CD8-positive, alpha-beta T cell (primary cell): ENCODE measurements at regions of chr1 and their contacts with region 1.

Region 1: DNA sequence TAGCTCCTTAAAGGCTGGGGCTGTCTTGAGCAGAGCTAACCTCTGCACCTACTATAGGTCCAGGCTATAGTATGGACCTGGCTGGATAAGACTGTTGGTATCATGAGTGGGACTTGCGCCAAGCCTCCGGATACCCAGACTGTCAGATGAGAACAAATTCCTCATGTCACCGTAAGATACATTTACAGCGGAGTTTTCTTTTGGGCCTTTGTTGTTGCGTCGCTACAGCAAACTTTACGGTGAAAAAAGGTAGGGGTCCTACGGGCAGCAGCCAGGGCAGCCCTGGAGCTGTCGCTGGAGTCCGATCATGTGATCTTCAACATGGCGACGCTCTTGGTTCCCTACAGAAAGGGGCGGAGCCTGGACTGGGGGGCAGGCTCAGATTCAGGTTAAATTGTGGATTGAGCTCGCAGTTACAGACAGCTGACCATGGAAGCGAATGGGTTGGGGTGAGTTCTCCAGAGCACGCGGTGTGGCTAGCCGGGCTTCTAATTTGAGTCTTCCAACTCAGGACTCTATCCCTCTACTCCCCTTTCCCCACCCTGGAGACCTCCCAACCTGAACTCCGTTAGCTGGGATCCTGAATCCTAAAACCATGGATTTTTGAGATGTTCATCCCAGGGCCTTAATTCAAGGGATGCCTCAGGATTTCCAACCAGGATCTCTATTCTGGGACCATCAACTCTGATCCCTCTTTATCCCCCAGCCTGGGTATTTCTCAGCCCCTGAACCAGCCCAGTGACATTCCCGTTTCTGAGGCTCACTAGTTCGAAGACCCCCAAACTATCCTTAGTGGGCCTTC is at the start of gene UROD:
- DNase-seq: peak; percentile 77 to 96 (median 86)
- ATAC-seq: peak; percentile 83
- H3K4me3 ChIP-seq: peak within 1 kb of the TSS; percentile 56 to 82
- H3K4me3 Mint-ChIP-seq: peak within 1 kb of the TSS; percentile 89
- H3K27ac ChIP-seq: peak within 1 kb of the TSS; percentile 61 to 77
- H3K27ac Mint-ChIP-seq: peak within 1 kb of the TSS; percentile 95
- H3K4me1 ChIP-seq: peaks cover 30% of the 10 kb centered on the region
- H3K4me1 Mint-ChIP-seq: peaks cover 52% of the 10 kb centered on the region
- H3K27me3 ChIP-seq: no peaks in the 10 kb centered on the region
- H3K27me3 Mint-ChIP-seq: no peaks in the 10 kb centered on the region
- CTCF ChIP-seq: no peak
- total RNA-seq, gene UROD: 38.3 to 41.2 TPM

Region 2: GRCh38 chr1:44103270-44104131 is 908.5 kb before region 1 on chr1:
- CTCF ChIA-PET with region 1: no interaction called
- POLR2A ChIA-PET with region 1: no interaction called
- intact Hi-C with region 1: no loop called
- DNase-seq: no peak
- ATAC-seq: no peak
- H3K4me3 ChIP-seq: no peak overlapping the region
- H3K4me3 Mint-ChIP-seq: no peak overlapping the region
- H3K27ac ChIP-seq: no peak overlapping the region
- H3K27ac Mint-ChIP-seq: no peak overlapping the region
- H3K4me1 ChIP-seq: no peaks in the 10 kb centered on the region
- H3K4me1 Mint-ChIP-seq: no peaks in the 10 kb centered on the region
- H3K27me3 ChIP-seq: peaks cover 0 to 3% of the 10 kb centered on the region in 2 experiments
- H3K27me3 Mint-ChIP-seq: peaks cover 19% of the 10 kb centered on the region
- CTCF ChIP-seq: no peak

Region 3: GRCh38 chr1:44775078-44775929 is 236.7 kb before region 1 on chr1 and contains the start of gene RPS8:
- CTCF ChIA-PET with region 1: interaction called, 3 read pairs
- POLR2A ChIA-PET with region 1: interaction called, 17 read pairs
- intact Hi-C with region 1: loop called in 1 of 2 experiments (anchors 1 kb)
- DNase-seq: peak; percentile 77 to 96 (median 90)
- ATAC-seq: peak; percentile 80
- H3K4me3 ChIP-seq: peak within 1 kb of the TSS; percentile 84 to 94
- H3K4me3 Mint-ChIP-seq: peak within 1 kb of the TSS; percentile 92
- H3K27ac ChIP-seq: peak within 1 kb of the TSS; percentile 92 to 95
- H3K27ac Mint-ChIP-seq: peak within 1 kb of the TSS; percentile 98
- H3K4me1 ChIP-seq: peaks cover 25% of the 10 kb centered on the region
- H3K4me1 Mint-ChIP-seq: peaks cover 39% of the 10 kb centered on the region
- H3K27me3 ChIP-seq: no peaks in the 10 kb centered on the region
- H3K27me3 Mint-ChIP-seq: no peaks in the 10 kb centered on the region
- CTCF ChIP-seq: no peak
- total RNA-seq, gene RPS8: 3,381 to 3,465 TPM

Region 4: GRCh38 chr1:44830900-44831304 is 181.1 kb before region 1 on chr1:
- CTCF ChIA-PET with region 1: interaction called, 4 read pairs
- POLR2A ChIA-PET with region 1: no interaction called
- intact Hi-C with region 1: loop called in 1 of 2 experiments (anchors 5 kb)
- DNase-seq: no peak
- ATAC-seq: no peak
- H3K4me3 ChIP-seq: no peak overlapping the region
- H3K4me3 Mint-ChIP-seq: no peak overlapping the region
- H3K27ac ChIP-seq: no peak overlapping the region
- H3K27ac Mint-ChIP-seq: no peak overlapping the region
- H3K4me1 ChIP-seq: no peaks in the 10 kb centered on the region
- H3K4me1 Mint-ChIP-seq: peaks cover 5% of the 10 kb centered on the region
- H3K27me3 ChIP-seq: no peaks in the 10 kb centered on the region
- H3K27me3 Mint-ChIP-seq: no peaks in the 10 kb centered on the region
- CTCF ChIP-seq: no peak

Region 5: DNA sequence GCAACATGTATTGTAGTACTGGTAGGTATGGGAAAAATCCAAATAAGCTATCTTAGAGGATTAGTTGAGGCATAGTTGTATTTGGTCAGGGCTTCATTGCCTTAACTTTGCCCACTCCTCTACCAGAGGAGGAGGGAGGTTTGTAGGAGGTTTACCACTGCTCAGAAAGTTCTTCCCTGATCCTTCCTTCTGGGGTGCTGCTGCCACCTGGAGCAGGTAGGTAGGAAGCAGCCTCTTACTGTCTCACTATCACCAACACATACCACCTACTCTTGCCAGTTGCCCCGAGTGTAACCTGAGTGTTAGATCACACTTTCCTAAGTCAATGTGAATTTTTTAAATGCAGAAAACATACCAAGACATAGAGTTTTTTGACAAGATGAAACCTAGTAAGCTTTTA is 218.5 kb after region 1 on chr1:
- CTCF ChIA-PET with region 1: interaction called, 5 read pairs
- POLR2A ChIA-PET with region 1: no interaction called
- intact Hi-C with region 1: loop called in 1 of 2 experiments (anchors 1 kb)
- DNase-seq: peak in 3 of 9 experiments; percentile 12 to 53 (median 45)
- ATAC-seq: no peak
- H3K4me3 ChIP-seq: no peak overlapping the region
- H3K4me3 Mint-ChIP-seq: no peak overlapping the region
- H3K27ac ChIP-seq: no peak overlapping the region
- H3K27ac Mint-ChIP-seq: no peak overlapping the region
- H3K4me1 ChIP-seq: no peaks in the 10 kb centered on the region
- H3K4me1 Mint-ChIP-seq: no peaks in the 10 kb centered on the region
- H3K27me3 ChIP-seq: no peaks in the 10 kb centered on the region
- H3K27me3 Mint-ChIP-seq: no peaks in the 10 kb centered on the region
- CTCF ChIP-seq: no peak

Region 6: DNA sequence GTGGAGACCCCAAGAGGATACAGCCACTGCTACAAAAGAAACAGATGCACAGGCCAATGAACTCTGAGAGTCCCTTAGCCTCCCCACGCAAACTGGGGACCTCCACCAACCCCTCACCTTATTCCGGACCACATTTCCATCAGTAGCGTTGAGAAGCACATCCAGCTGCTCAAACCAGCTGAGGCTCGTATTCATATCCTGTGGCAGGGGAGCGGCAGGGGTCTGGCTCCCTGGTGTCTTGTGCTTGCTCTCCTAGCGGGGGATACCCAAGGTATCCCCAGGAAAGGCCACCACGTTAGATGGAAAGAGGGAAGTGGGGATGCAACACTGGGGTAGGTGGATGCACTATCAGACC is 487.4 kb after region 1 on chr1:
- CTCF ChIA-PET with region 1: interaction called, 116 read pairs
- POLR2A ChIA-PET with region 1: interaction called, 7 read pairs
- intact Hi-C with region 1: no loop called
- DNase-seq: peak in 1 of 9 experiments; percentile 55
- ATAC-seq: no peak
- H3K4me3 ChIP-seq: peak overlapping the region; percentile 59 to 83
- H3K4me3 Mint-ChIP-seq: peak overlapping the region; percentile 93
- H3K27ac ChIP-seq: peak overlapping the region; percentile 39 to 76
- H3K27ac Mint-ChIP-seq: peak overlapping the region; percentile 90
- H3K4me1 ChIP-seq: peaks cover 20% of the 10 kb centered on the region
- H3K4me1 Mint-ChIP-seq: peaks cover 37% of the 10 kb centered on the region
- H3K27me3 ChIP-seq: no peaks in the 10 kb centered on the region
- H3K27me3 Mint-ChIP-seq: no peaks in the 10 kb centered on the region
- CTCF ChIP-seq: no peak

Region 7: GRCh38 chr1:45686317-45687013 is 674.4 kb after region 1 on chr1 and contains the start of gene GPBP1L1:
- CTCF ChIA-PET with region 1: no interaction called
- POLR2A ChIA-PET with region 1: no interaction called
- intact Hi-C with region 1: loop called (anchors 2 to 10 kb)
- DNase-seq: peak; percentile 95 to 98 (median 98)
- ATAC-seq: peak; percentile 72
- H3K4me3 ChIP-seq: peak within 1 kb of the TSS; percentile 99
- H3K4me3 Mint-ChIP-seq: peak within 1 kb of the TSS; percentile 97
- H3K27ac ChIP-seq: peak within 1 kb of the TSS; percentile 84 to 92
- H3K27ac Mint-ChIP-seq: peak within 1 kb of the TSS; percentile 100
- H3K4me1 ChIP-seq: peaks cover 39% of the 10 kb centered on the region
- H3K4me1 Mint-ChIP-seq: peaks cover 59% of the 10 kb centered on the region
- H3K27me3 ChIP-seq: no peaks in the 10 kb centered on the region
- H3K27me3 Mint-ChIP-seq: no peaks in the 10 kb centered on the region
- CTCF ChIP-seq: no peak
- total RNA-seq, gene GPBP1L1: 125 to 128 TPM